B cell (primary cell): ENCODE measurements at regions of chr6 and their contacts with region 1.

Region 1: GRCh38 chr6:125314019-125314581 is 12.3 kb upstream of the HDDC2 start:
- DNase-seq: peak; percentile 79
- ATAC-seq: peak; percentile 85
- H3K4me3 ChIP-seq: no peak overlapping the region
- H3K4me3 Mint-ChIP-seq: no peak overlapping the region
- H3K27ac ChIP-seq: no peak overlapping the region
- H3K27ac Mint-ChIP-seq: no peak overlapping the region
- H3K4me1 ChIP-seq: no peaks in the 10 kb centered on the region
- H3K4me1 Mint-ChIP-seq: no peaks in the 10 kb centered on the region
- H3K27me3 ChIP-seq: peaks cover 0 to 5% (median 2%) of the 10 kb centered on the region in 4 experiments
- H3K27me3 Mint-ChIP-seq: peaks cover 16% of the 10 kb centered on the region
- CTCF ChIP-seq: peak; percentile 82

Region 2: GRCh38 chr6:125301435-125302391 is 12.4 kb before region 1 on chr6 and contains the start of gene HDDC2:
- CTCF ChIA-PET with region 1: interaction called, 43 read pairs
- POLR2A ChIA-PET with region 1: no interaction called
- intact Hi-C with region 1: no loop called
- DNase-seq: peak; percentile 63
- ATAC-seq: peak; percentile 72
- H3K4me3 ChIP-seq: peak within 1 kb of the TSS; percentile 61 to 85 (median 81)
- H3K4me3 Mint-ChIP-seq: peak within 1 kb of the TSS; percentile 93
- H3K27ac ChIP-seq: peak within 1 kb of the TSS; percentile 38 to 81
- H3K27ac Mint-ChIP-seq: peak within 1 kb of the TSS; percentile 87
- H3K4me1 ChIP-seq: peaks cover 16% of the 10 kb centered on the region in 2 donors
- H3K4me1 Mint-ChIP-seq: peaks cover 43% of the 10 kb centered on the region
- H3K27me3 ChIP-seq: peaks cover 0 to 8% (median 0%) of the 10 kb centered on the region in 4 experiments
- H3K27me3 Mint-ChIP-seq: peaks cover 18% of the 10 kb centered on the region
- CTCF ChIP-seq: no peak
- total RNA-seq, gene HDDC2: 31.6 and 38.4 TPM in 2 replicates

Region 3: DNA sequence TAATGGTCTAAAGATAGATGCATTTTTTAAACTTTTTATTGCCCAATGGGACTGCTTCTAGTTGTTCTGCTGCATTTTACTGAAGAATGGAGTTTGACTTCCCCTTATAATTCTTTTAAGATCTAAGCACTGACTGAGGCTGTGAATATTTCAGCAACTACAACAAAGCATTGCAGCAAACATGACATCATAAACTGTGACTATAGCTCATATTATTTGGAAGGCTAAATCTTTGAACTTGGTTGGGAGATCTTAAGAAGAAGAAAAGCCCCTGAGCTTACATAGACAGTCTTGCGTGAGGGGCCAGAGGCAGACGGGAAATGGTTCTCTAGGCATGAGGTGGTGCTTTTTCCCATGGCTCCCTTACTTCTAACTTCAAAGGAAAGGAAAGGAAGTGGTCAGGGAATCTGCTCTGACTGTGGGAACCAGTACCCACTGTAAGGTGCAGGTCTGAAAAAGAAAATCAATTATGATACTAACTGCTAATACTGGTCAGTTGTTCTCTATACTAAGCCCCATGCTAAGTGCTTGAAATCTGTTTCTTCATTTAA is 450.1 kb after region 1 on chr6:
- CTCF ChIA-PET with region 1: interaction called, 375 read pairs
- POLR2A ChIA-PET with region 1: no interaction called
- intact Hi-C with region 1: loop called (anchors 1 kb)
- DNase-seq: no peak
- ATAC-seq: no peak
- H3K4me3 ChIP-seq: no peak overlapping the region
- H3K4me3 Mint-ChIP-seq: no peak overlapping the region
- H3K27ac ChIP-seq: no peak overlapping the region
- H3K27ac Mint-ChIP-seq: no peak overlapping the region
- H3K4me1 ChIP-seq: no peaks in the 10 kb centered on the region
- H3K4me1 Mint-ChIP-seq: peaks cover 1% of the 10 kb centered on the region
- H3K27me3 ChIP-seq: peaks cover 0 to 14% (median 8%) of the 10 kb centered on the region in 4 experiments
- H3K27me3 Mint-ChIP-seq: peaks cover 55% of the 10 kb centered on the region
- CTCF ChIP-seq: no peak

Region 4: DNA sequence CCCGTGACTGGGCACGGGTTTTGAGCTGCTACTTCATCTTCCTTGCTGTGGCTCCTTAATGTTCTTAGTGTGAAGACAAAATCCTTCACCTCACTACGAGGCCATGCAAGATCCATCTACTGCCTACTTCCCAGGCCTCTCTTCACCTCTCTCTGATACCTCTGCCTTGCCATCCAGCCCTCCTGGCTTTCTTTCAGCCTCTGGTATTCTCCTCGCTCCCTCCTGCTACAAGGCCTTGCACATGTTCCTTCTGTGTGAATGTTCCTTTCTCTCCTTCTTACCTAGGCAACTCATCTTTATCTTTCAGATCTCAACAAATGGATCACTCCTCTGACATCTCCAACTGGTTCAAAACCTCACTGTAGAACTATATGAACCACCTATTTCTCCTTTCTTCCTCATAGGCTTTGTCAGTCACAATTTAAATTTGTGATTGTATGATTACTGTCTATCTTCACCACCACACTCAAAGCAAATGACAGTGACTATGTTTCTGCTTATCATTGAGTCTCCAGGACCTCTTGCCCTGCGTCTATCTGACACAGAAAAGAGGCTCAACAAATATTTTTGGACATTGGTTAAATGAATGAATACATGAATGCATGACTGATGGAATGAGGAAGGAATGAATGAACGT is 455.2 kb after region 1 on chr6:
- CTCF ChIA-PET with region 1: interaction called, 114 read pairs
- POLR2A ChIA-PET with region 1: no interaction called
- intact Hi-C with region 1: loop called (anchors 1 kb)
- DNase-seq: no peak
- ATAC-seq: no peak
- H3K4me3 ChIP-seq: no peak overlapping the region
- H3K4me3 Mint-ChIP-seq: no peak overlapping the region
- H3K27ac ChIP-seq: no peak overlapping the region
- H3K27ac Mint-ChIP-seq: no peak overlapping the region
- H3K4me1 ChIP-seq: no peaks in the 10 kb centered on the region
- H3K4me1 Mint-ChIP-seq: no peaks in the 10 kb centered on the region
- H3K27me3 ChIP-seq: peaks cover 0 to 10% (median 6%) of the 10 kb centered on the region in 4 experiments
- H3K27me3 Mint-ChIP-seq: peaks cover 46% of the 10 kb centered on the region
- CTCF ChIP-seq: no peak

Region 5: GRCh38 chr6:125986300-125987025 is 672.4 kb after region 1 on chr6 and contains the start of gene TRMT11:
- CTCF ChIA-PET with region 1: interaction called, 6 read pairs
- POLR2A ChIA-PET with region 1: no interaction called
- intact Hi-C with region 1: loop called (anchors 5 kb)
- DNase-seq: peak; percentile 86
- ATAC-seq: peak; percentile 92
- H3K4me3 ChIP-seq: peak within 1 kb of the TSS; percentile 78 to 94 (median 89)
- H3K4me3 Mint-ChIP-seq: peak within 1 kb of the TSS; percentile 35
- H3K27ac ChIP-seq: peak within 1 kb of the TSS; percentile 77 to 86
- H3K27ac Mint-ChIP-seq: no peak within 1 kb of the TSS
- H3K4me1 ChIP-seq: peaks cover 10 to 12% of the 10 kb centered on the region in 2 donors
- H3K4me1 Mint-ChIP-seq: peaks cover 5% of the 10 kb centered on the region
- H3K27me3 ChIP-seq: no peaks in the 10 kb centered on the region
- H3K27me3 Mint-ChIP-seq: no peaks in the 10 kb centered on the region
- CTCF ChIP-seq: no peak
- total RNA-seq, gene TRMT11: 29.3 and 30.4 TPM in 2 replicates